Esophagus squamous epithelium (tissue), 5 donors: ENCODE measurements at regions of chr2 and their contacts with region 1.

Region 1: DNA sequence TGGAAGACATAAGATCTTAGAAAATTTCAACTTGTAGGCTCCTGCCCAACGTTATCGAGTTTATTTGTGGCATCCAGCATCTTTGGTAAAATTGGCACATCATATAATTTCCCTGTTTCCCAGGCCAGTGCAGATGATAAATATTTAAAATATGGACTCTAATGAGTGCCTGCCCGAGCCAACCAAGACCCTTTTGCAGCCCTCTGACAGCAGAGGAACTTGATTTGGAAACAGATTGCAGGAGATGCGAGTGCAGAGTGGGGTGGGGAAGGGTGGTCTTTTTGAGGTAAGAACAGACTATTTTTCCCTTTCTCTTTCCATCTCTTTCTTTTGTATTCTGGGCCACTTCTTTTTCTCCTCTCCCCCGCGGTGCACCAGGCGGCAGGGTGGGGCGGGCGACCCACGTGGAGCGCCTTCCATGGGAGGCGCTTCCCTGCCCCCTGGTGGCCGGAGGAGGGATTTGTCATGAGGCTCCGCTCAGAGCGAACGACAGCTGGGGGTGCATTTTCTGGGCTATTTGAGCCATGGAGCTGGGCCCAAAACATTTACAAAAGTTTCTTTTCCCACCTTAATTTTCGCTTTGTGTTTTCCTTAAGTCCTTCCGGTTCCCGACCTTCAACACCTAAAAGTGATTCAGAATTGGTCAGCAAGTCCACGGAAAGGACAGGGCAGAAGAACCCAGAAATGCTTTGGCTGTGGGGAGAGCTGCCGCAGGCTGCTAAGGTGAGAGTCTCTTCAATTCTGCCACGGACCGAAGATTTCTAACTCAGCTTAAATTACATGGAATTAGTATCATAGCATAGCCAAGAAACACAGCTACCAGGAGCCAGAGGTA is 32.7 kb downstream of the LPIN1 start:
- DNase-seq: peak; percentile 4
- H3K4me3 ChIP-seq: peak overlapping the region in 2 of 4 donors; percentile 2 to 21
- H3K27ac ChIP-seq: peak overlapping the region in 1 of 4 donors; percentile 5
- H3K4me1 ChIP-seq: peaks cover 0 to 21% (median 6%) of the 10 kb centered on the region in 3 donors
- H3K27me3 ChIP-seq: no peaks in the 10 kb centered on the region
- CTCF ChIP-seq: peak; percentile 92 to 98 (median 96)
- POLR2A ChIP-seq: no peak

Region 2: DNA sequence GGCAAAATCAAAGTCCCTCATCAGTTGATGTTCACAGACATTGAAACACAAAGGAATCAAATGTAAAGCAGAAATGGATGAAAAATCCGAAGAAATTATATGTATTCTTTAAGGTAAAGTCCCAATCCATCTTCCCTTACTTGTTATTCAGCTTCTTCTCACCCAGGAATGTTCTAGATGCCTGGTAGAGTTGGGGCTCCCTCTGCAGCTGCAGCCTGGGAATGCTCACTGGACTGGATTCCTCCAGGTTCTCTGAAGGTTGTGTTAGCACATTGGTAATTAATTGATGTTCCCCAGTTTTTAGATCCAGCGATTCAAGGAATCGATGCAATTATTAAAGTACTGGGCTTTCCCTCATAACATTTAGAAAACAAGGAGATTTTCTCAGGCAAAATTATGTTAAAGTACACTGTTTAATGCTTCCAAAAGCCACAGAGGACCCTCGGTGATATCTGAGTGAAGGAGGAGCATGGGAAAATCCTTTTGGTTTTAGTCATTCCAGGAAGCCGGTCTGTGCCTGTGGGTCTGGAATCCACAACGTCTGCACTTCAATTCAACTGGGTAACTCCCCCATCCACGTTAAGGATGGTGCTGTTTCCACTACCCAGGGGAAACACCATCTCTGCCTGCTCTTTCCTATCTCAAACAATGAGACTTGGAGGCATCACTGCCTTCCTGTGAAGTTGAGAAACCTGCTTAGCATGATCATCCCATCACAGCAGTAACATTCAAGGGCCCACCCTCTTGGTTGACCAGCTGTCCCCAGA is 131.1 kb before region 1 on chr2:
- intact Hi-C with region 1: no loop called
- DNase-seq: no peak
- H3K4me3 ChIP-seq: no peak overlapping the region
- H3K27ac ChIP-seq: no peak overlapping the region
- H3K4me1 ChIP-seq: no peaks in the 10 kb centered on the region
- H3K27me3 ChIP-seq: peaks cover 0 to 3% (median under 1%) of the 10 kb centered on the region in 4 donors
- CTCF ChIP-seq: peak in 1 of 6 experiments; percentile 29
- POLR2A ChIP-seq: no peak

Region 3: GRCh38 chr2:11692966-11693521 is 86.1 kb before region 1 on chr2:
- intact Hi-C with region 1: loop called (anchors 2 kb)
- DNase-seq: no peak
- H3K4me3 ChIP-seq: no peak overlapping the region
- H3K27ac ChIP-seq: no peak overlapping the region
- H3K4me1 ChIP-seq: peaks cover 4 to 34% (median 28%) of the 10 kb centered on the region in 3 donors
- H3K27me3 ChIP-seq: no peaks in the 10 kb centered on the region
- CTCF ChIP-seq: peak; percentile 60 to 76 (median 68)
- POLR2A ChIP-seq: no peak

Region 4: GRCh38 chr2:12032398-12032797 is 253.3 kb after region 1 on chr2:
- intact Hi-C with region 1: no loop called
- DNase-seq: no peak
- H3K4me3 ChIP-seq: no peak overlapping the region
- H3K27ac ChIP-seq: no peak overlapping the region
- H3K4me1 ChIP-seq: peaks cover 0 to 5% (median 0%) of the 10 kb centered on the region in 3 donors
- H3K27me3 ChIP-seq: no peaks in the 10 kb centered on the region
- CTCF ChIP-seq: no peak
- POLR2A ChIP-seq: no peak